ENCODE measurements at regions of chr1 and their contacts with region 1.

Region 1: DNA sequence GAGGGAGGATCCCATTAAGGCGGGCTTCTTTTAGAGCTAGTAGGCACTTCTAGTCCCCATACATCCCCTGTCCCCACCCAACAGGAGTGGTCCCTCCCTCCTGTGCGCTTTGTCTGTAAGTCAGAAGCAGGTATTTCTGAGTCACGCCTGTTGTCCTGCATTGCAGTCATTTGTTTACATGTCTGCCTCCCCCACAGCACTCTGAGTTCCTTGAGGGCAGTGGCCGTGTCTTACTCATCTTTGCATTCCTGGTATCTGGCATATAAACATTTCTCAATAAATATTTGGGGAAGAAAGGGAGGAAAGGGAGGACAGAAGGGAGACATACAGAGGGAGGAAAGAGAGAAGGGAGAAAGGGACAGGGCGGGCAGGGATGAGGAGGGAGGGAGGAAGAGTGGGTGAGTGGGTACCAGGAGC is 40.2 kb downstream of the PLEKHA6 start:
- DNase-seq: peak; percentile 91
- H3K4me3 ChIP-seq: no peak overlapping the region
- H3K27ac ChIP-seq: peak overlapping the region; percentile 75
- H3K4me1 ChIP-seq: peaks cover 45% of the 10 kb centered on the region
- H3K27me3 ChIP-seq: no peaks in the 10 kb centered on the region
- CTCF ChIP-seq: no peak

Region 2: GRCh38 chr1:204128964-204129896 is 190.3 kb before region 1 on chr1:
- CTCF ChIA-PET with region 1: no interaction called
- dilution Hi-C with region 1: no loop called
- in situ Hi-C with region 1: no loop called
- intact Hi-C with region 1: no loop called
- DNase-seq: peak; percentile 31
- H3K4me3 ChIP-seq: peak overlapping the region; percentile 18 to 45 (median 31)
- H3K27ac ChIP-seq: no peak overlapping the region
- H3K4me1 ChIP-seq: peaks cover 35% of the 10 kb centered on the region
- H3K27me3 ChIP-seq: no peaks in the 10 kb centered on the region
- CTCF ChIP-seq: peak; percentile 66 to 87

Region 3: DNA sequence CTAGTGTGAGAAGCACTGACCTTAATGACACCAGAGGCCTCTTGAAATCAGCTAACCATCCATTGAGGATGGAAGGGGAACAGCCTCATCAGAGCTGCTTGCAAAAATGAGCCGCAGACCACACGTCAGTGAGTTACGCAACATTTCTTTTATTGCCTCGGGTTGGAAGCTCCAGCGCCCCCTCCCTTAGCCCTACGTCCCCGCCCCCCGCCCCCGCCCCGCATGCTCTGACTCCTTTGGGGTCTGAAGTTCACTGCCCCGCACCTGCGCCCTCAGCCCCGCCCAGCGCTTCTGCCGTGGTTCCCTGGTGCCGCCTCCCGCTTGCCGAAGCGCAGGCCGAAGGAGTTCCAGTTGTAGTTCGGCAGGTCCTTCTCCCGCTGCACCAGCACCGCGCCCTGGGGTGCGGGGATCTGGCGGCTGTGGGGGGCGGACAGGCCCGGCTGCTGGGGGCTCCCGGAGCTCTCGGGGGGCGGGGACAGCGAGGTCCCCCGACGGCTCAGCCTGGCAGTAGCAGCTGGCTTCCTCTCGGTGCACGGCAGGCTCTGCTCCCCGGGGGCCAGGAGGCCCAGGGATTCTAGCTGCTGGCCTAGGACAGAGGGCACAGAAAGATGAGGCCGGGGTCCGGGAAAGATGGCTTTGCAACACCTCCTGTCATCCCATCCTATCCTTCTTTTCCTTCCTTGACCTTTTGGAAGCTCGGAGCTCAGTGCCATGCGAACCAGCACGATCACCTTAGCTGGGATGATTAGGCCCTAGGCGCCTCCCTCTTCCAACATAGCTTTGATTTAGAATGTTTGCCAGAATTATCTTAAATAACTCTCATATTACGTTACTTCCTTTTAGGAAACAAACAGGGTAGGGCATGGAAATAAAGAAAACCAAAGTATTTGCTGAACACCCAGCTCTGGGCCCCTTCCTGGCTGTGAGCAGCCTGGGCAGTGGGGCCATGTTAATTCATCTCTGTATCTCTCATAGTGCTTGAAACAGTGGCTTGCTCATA is 129.0 kb before region 1 on chr1:
- CTCF ChIA-PET with region 1: no interaction called
- dilution Hi-C with region 1: no loop called
- in situ Hi-C with region 1: no loop called
- intact Hi-C with region 1: no loop called
- DNase-seq: no peak
- H3K4me3 ChIP-seq: no peak overlapping the region
- H3K27ac ChIP-seq: no peak overlapping the region
- H3K4me1 ChIP-seq: peaks cover 11% of the 10 kb centered on the region
- H3K27me3 ChIP-seq: no peaks in the 10 kb centered on the region
- CTCF ChIP-seq: no peak

Region 4: DNA sequence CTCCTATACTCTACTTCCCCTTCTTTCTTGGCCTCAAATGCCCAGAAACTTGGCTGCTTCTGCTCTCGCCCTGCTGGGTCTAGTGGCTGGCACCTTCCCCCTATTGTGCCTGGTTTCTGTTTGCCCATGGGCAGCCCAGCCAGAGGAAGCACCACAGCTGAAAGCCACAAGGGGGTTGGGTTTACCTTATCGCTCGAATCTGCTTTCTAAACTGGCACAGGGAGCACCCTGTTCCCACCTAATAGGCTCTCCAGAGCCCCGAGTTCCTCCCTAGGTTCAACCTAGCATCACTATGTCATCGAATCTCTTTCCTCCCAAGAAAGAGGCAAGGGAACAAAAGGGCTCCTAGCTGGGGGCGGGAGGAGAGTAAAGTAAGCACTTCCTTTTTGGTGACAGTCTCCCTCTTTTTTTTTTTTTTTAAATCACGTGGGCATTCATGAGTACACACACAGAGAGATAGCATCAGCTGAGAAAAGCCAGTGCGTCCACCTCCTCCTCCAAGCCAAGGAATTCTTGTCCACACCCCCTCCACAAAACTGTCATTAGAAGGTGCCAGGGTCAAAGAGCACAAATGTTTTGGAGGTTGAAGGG is 32.6 kb before region 1 on chr1:
- CTCF ChIA-PET with region 1: interaction called, 4 read pairs
- dilution Hi-C with region 1: no loop called
- in situ Hi-C with region 1: no loop called
- intact Hi-C with region 1: loop called (anchors 1 kb)
- DNase-seq: peak; percentile 33
- H3K4me3 ChIP-seq: peak overlapping the region; percentile 41 to 55 (median 44)
- H3K27ac ChIP-seq: peak overlapping the region; percentile 62
- H3K4me1 ChIP-seq: peaks cover 29% of the 10 kb centered on the region
- H3K27me3 ChIP-seq: no peaks in the 10 kb centered on the region
- CTCF ChIP-seq: peak in 1 of 2 donors; percentile 11

Region 5: GRCh38 chr1:204296431-204296988 is 23.0 kb before region 1 on chr1:
- CTCF ChIA-PET with region 1: no interaction called
- dilution Hi-C with region 1: no loop called
- in situ Hi-C with region 1: no loop called
- intact Hi-C with region 1: loop called (anchors 2 kb)
- DNase-seq: no peak
- H3K4me3 ChIP-seq: no peak overlapping the region
- H3K27ac ChIP-seq: no peak overlapping the region
- H3K4me1 ChIP-seq: peaks cover 44% of the 10 kb centered on the region
- H3K27me3 ChIP-seq: no peaks in the 10 kb centered on the region
- CTCF ChIP-seq: no peak

Region 6: DNA sequence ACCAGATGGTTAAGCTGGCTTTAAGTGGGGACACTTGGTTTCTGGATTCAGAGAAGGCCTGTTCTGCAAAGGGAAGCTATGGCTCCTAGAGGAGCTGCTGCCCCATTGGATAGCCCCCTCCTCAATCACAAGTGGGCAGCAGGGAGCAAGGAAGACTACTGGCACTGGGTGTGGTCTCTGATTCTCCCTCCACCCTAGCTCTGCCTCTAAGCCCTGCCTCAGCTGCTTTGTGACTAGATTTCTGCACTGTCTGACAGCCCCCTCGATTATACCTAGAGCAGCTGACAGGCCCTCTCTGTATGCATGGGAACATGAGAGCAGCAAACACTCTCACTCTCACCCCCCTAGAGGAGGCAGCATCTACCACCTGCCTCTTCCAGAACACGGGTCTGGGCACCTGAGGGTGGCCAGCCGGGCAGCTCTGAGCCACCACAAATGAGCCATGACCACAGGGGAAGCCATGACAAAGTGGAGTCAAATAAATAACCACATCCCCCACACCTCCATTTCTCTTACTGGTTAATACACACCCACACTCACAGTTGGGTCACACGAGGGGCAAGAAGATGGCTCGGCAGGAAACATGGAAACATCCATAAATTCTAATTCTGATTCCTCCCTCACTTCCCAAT is 26.6 kb after region 1 on chr1:
- CTCF ChIA-PET with region 1: no interaction called
- dilution Hi-C with region 1: no loop called
- in situ Hi-C with region 1: no loop called
- intact Hi-C with region 1: loop called (anchors 2 kb)
- DNase-seq: no peak
- H3K4me3 ChIP-seq: no peak overlapping the region
- H3K27ac ChIP-seq: no peak overlapping the region
- H3K4me1 ChIP-seq: no peaks in the 10 kb centered on the region
- H3K27me3 ChIP-seq: no peaks in the 10 kb centered on the region
- CTCF ChIP-seq: no peak

Measured in mammary epithelial cell (primary cell).